ENCODE measurements at regions of chr10 and their contacts with region 1.

Region 1: DNA sequence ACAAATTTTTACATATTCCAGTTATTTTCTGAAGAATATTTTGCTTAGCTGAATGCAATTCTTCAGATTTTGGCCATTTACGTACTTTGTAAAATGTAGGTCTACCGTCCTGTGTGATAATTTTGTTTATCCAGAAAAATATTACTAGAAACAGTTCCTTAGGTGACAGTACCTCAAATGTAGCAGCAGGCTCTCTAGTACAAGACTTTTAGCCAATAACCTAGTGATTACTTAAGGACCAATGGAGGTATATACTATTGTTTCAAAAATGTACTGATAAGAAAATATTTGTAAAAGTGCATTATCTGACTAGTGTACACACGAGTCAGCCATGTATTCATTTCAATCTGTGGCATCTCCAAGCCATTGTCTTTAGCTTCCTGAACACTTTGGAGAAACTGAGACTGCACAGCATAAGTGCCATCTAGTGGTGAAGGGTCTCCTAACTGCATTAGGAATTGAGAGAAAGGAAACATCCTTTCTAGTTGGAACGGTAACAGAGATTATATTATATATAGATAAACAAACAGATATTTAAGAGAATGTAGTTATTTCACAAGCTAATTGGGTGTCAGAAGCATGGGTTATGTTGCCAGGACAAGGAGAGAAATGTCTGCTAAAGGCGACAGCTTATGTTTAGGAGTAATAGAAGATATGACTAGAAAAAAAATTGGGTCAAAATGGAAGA is 23.7 kb downstream of the RTKN2 start:
- DNase-seq: peak in 8 of 9 experiments; percentile 10 to 80 (median 45)
- ATAC-seq: peak; percentile 88
- H3K4me3 ChIP-seq: no peak overlapping the region
- H3K4me3 Mint-ChIP-seq: no peak overlapping the region
- H3K27ac ChIP-seq: no peak overlapping the region
- H3K27ac Mint-ChIP-seq: no peak overlapping the region
- H3K4me1 ChIP-seq: peaks cover 4% of the 10 kb centered on the region
- H3K4me1 Mint-ChIP-seq: peaks cover 17% of the 10 kb centered on the region
- H3K27me3 ChIP-seq: no peaks in the 10 kb centered on the region
- H3K27me3 Mint-ChIP-seq: no peaks in the 10 kb centered on the region
- CTCF ChIP-seq: peak; percentile 90

Region 2: GRCh38 chr10:61628875-61629513 is 615.9 kb before region 1 on chr10:
- CTCF ChIA-PET with region 1: no interaction called
- POLR2A ChIA-PET with region 1: no interaction called
- intact Hi-C with region 1: no loop called
- DNase-seq: no peak
- ATAC-seq: no peak
- H3K4me3 ChIP-seq: no peak overlapping the region
- H3K4me3 Mint-ChIP-seq: no peak overlapping the region
- H3K27ac ChIP-seq: no peak overlapping the region
- H3K27ac Mint-ChIP-seq: no peak overlapping the region
- H3K4me1 ChIP-seq: no peaks in the 10 kb centered on the region
- H3K4me1 Mint-ChIP-seq: no peaks in the 10 kb centered on the region
- H3K27me3 ChIP-seq: no peaks in the 10 kb centered on the region
- H3K27me3 Mint-ChIP-seq: no peaks in the 10 kb centered on the region
- CTCF ChIP-seq: no peak

Region 3: DNA sequence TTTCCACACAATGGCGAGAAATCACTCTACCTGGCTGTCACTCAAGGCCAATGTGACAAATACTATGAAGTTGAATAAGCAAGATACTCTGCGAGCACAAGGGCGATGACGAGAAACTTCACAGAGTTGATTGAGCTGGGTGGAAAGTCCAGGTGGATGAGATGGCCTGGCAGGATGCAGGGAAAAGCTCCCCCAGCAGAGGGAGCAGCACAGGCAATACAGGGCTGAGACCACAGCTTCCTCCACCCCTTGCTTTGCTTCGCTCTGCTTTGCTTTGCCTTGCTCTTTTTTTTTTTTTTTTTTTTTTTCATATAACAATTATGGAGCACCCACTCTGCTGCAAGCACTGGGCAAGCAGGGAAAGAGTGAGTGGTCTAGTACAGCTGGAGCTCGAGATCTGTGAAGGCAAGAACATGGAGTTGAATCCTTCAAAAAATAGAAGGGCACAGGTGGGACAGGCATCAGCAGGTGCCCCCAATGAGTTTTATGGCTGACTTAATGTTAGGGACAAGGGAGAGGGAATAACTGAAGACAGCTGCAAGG is 493.9 kb before region 1 on chr10:
- CTCF ChIA-PET with region 1: interaction called, 9 read pairs
- POLR2A ChIA-PET with region 1: no interaction called
- intact Hi-C with region 1: loop called (anchors 1 to 5 kb)
- DNase-seq: peak; percentile 27 to 79 (median 64)
- ATAC-seq: peak; percentile 95
- H3K4me3 ChIP-seq: no peak overlapping the region
- H3K4me3 Mint-ChIP-seq: no peak overlapping the region
- H3K27ac ChIP-seq: no peak overlapping the region
- H3K27ac Mint-ChIP-seq: no peak overlapping the region
- H3K4me1 ChIP-seq: peaks cover 9% of the 10 kb centered on the region
- H3K4me1 Mint-ChIP-seq: peaks cover 21% of the 10 kb centered on the region
- H3K27me3 ChIP-seq: no peaks in the 10 kb centered on the region
- H3K27me3 Mint-ChIP-seq: no peaks in the 10 kb centered on the region
- CTCF ChIP-seq: peak; percentile 67

Region 4: GRCh38 chr10:61903221-61903927 is 341.6 kb before region 1 on chr10:
- CTCF ChIA-PET with region 1: interaction called, 60 read pairs
- POLR2A ChIA-PET with region 1: interaction called, 3 read pairs
- intact Hi-C with region 1: loop called in 1 of 2 experiments (anchors 1 kb)
- DNase-seq: peak; percentile 39 to 83 (median 67)
- ATAC-seq: peak; percentile 41
- H3K4me3 ChIP-seq: peak overlapping the region; percentile 91 to 93
- H3K4me3 Mint-ChIP-seq: peak overlapping the region; percentile 84
- H3K27ac ChIP-seq: peak overlapping the region; percentile 94 to 95
- H3K27ac Mint-ChIP-seq: peak overlapping the region; percentile 97
- H3K4me1 ChIP-seq: peaks cover 24% of the 10 kb centered on the region
- H3K4me1 Mint-ChIP-seq: peaks cover 44% of the 10 kb centered on the region
- H3K27me3 ChIP-seq: no peaks in the 10 kb centered on the region
- H3K27me3 Mint-ChIP-seq: no peaks in the 10 kb centered on the region
- CTCF ChIP-seq: peak; percentile 22

Region 5: GRCh38 chr10:62050893-62051433 is 194.0 kb before region 1 on chr10:
- CTCF ChIA-PET with region 1: interaction called, 10 read pairs
- POLR2A ChIA-PET with region 1: no interaction called
- intact Hi-C with region 1: no loop called
- DNase-seq: peak; percentile 32 to 87 (median 57)
- ATAC-seq: peak; percentile 74
- H3K4me3 ChIP-seq: peak overlapping the region in 1 of 2 experiments; percentile 36
- H3K4me3 Mint-ChIP-seq: peak overlapping the region; percentile 74
- H3K27ac ChIP-seq: peak overlapping the region; percentile 14 to 73
- H3K27ac Mint-ChIP-seq: peak overlapping the region; percentile 86
- H3K4me1 ChIP-seq: peaks cover 38% of the 10 kb centered on the region
- H3K4me1 Mint-ChIP-seq: peaks cover 78% of the 10 kb centered on the region
- H3K27me3 ChIP-seq: no peaks in the 10 kb centered on the region
- H3K27me3 Mint-ChIP-seq: no peaks in the 10 kb centered on the region
- CTCF ChIP-seq: no peak

Region 6: GRCh38 chr10:62082729-62083411 is 162.1 kb before region 1 on chr10:
- CTCF ChIA-PET with region 1: interaction called, 12 read pairs
- POLR2A ChIA-PET with region 1: no interaction called
- intact Hi-C with region 1: no loop called
- DNase-seq: peak in 8 of 9 experiments; percentile 9 to 68 (median 36)
- ATAC-seq: peak; percentile 86
- H3K4me3 ChIP-seq: no peak overlapping the region
- H3K4me3 Mint-ChIP-seq: peak overlapping the region; percentile 46
- H3K27ac ChIP-seq: peak overlapping the region in 1 of 2 experiments; percentile 68
- H3K27ac Mint-ChIP-seq: peak overlapping the region; percentile 55
- H3K4me1 ChIP-seq: peaks cover 19% of the 10 kb centered on the region
- H3K4me1 Mint-ChIP-seq: peaks cover 43% of the 10 kb centered on the region
- H3K27me3 ChIP-seq: no peaks in the 10 kb centered on the region
- H3K27me3 Mint-ChIP-seq: no peaks in the 10 kb centered on the region
- CTCF ChIP-seq: no peak

Region 7: GRCh38 chr10:62149621-62150020 is 95.3 kb before region 1 on chr10:
- CTCF ChIA-PET with region 1: interaction called, 13 read pairs
- POLR2A ChIA-PET with region 1: no interaction called
- intact Hi-C with region 1: loop called (anchors 1 to 5 kb)
- DNase-seq: no peak
- ATAC-seq: no peak
- H3K4me3 ChIP-seq: no peak overlapping the region
- H3K4me3 Mint-ChIP-seq: no peak overlapping the region
- H3K27ac ChIP-seq: no peak overlapping the region
- H3K27ac Mint-ChIP-seq: no peak overlapping the region
- H3K4me1 ChIP-seq: no peaks in the 10 kb centered on the region
- H3K4me1 Mint-ChIP-seq: peaks cover 10% of the 10 kb centered on the region
- H3K27me3 ChIP-seq: no peaks in the 10 kb centered on the region
- H3K27me3 Mint-ChIP-seq: no peaks in the 10 kb centered on the region
- CTCF ChIP-seq: no peak

Region 8: DNA sequence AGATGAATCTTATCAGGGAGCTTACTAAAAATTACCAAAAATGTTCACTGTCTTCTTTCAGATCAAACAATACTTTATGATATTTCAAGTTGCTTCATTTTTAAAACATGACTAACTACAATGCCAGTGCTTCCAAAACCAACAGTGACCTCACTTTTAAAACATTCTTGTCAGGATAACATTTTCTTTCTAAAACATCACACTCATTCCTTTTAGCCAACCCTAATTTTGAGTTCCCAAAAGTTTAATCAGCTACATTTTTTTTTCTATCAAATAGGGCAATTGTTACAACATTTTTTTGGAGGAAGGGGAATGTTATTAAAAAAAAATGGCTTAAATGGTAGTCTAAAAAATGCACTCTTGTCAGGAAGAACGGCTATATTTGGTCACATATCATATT is 13.6 kb before region 1 on chr10:
- CTCF ChIA-PET with region 1: interaction called, 17 read pairs
- POLR2A ChIA-PET with region 1: no interaction called
- intact Hi-C with region 1: no loop called
- DNase-seq: no peak
- ATAC-seq: no peak
- H3K4me3 ChIP-seq: no peak overlapping the region
- H3K4me3 Mint-ChIP-seq: no peak overlapping the region
- H3K27ac ChIP-seq: no peak overlapping the region
- H3K27ac Mint-ChIP-seq: no peak overlapping the region
- H3K4me1 ChIP-seq: peaks cover 6% of the 10 kb centered on the region
- H3K4me1 Mint-ChIP-seq: peaks cover 14% of the 10 kb centered on the region
- H3K27me3 ChIP-seq: no peaks in the 10 kb centered on the region
- H3K27me3 Mint-ChIP-seq: no peaks in the 10 kb centered on the region
- CTCF ChIP-seq: no peak

Region 9: DNA sequence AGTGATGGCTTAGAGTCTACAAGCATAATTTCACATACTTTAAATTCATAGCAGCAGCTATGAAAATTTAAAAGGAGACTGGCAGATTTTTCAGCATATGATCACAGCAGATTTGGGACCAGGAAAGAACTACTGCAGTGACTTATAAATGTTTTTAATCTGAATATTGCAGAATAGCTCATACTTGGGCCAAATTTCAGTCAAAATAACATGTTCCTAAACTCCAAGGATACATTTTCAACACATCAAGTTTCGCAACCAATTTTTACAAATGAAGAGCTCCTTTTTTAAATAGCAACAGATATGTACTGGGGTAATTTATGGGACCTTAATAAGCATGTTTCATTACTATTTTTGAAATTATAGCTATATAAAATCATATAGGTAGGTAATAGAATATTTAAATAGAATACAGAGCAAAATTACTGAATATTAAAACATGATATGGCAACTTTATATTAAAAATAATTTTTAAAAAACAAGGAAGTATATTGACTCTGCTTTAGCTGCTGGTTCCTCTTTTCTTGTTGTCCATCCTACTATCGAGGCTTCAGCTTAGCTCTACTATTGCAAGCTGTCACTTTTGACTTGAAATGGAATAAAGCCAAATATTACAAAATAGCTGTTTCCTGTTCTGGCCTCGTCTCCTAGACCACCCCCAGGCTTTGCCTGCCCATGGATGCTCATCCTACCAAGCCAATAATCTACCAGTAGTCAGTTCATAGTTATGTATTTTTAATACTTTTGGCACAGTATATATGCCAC is 1011.3 kb after region 1 on chr10:
- CTCF ChIA-PET with region 1: no interaction called
- POLR2A ChIA-PET with region 1: no interaction called
- intact Hi-C with region 1: no loop called
- DNase-seq: no peak
- ATAC-seq: no peak
- H3K4me3 ChIP-seq: no peak overlapping the region
- H3K4me3 Mint-ChIP-seq: peak overlapping the region; percentile 39
- H3K27ac ChIP-seq: peak overlapping the region in 1 of 2 experiments; percentile 16
- H3K27ac Mint-ChIP-seq: peak overlapping the region; percentile 43
- H3K4me1 ChIP-seq: peaks cover 51% of the 10 kb centered on the region
- H3K4me1 Mint-ChIP-seq: peaks cover 84% of the 10 kb centered on the region
- H3K27me3 ChIP-seq: no peaks in the 10 kb centered on the region
- H3K27me3 Mint-ChIP-seq: no peaks in the 10 kb centered on the region
- CTCF ChIP-seq: no peak